Lower leg skin (tissue), 4 donors: ENCODE measurements at regions of chr20 and their contacts with region 1.

Region 1: DNA sequence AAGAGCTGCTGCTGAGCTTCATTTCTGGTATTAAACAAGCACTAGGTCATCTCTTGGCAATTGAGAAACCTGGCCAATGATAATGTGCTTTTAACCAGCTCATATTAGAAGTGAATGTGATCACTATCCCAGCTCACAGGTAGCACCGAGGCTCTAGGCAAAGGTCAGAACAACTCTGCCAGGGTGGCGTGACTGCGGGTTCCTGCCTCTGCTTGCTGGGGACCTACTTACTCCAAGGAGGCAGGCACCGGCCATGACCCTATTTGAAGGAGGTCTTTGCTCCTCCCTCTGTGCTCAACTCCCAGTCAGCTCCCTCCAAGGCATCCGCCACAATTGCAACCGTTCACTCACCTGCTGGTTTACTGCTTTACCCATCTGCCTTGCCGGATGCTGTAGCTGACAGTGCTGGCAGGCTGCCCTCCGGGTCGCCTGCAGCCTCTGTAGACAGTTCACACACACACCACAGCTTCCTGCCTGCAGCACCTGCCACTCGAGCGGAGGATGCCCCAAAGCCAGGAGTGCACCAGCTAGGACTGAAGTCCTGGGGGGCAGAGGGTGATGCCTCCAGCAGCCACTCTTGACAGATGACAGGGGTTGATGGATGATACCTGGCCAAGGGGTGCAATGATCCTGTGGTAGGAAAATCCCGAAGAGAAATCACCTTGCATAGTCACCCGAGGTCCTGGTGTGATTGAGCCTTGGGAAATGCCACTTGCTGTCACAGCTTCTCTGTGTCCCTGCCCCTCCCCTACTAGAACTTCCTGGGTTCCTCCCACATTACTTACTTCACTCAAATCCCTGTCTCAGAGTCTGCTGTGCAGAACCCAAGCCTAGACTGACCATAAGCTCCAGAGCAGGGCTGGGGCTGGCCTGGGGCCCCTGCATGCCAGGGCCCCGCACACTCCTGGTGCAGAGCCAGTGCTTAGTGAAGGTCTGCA is 8.8 kb upstream of the VSX1 start:
- DNase-seq: no peak
- H3K4me3 ChIP-seq: no peak overlapping the region
- CTCF ChIP-seq: no peak
- POLR2A ChIP-seq: no peak

Region 2: GRCh38 chr20:23231596-23232581 is 1858.9 kb before region 1 on chr20:
- intact Hi-C with region 1: loop called (anchors 5 kb)
- DNase-seq: peak in 1 of 2 donors; percentile 77
- H3K4me3 ChIP-seq: no peak overlapping the region
- CTCF ChIP-seq: no peak
- POLR2A ChIP-seq: no peak